Psoas muscle (tissue), 8 donors: ENCODE measurements at regions of chr16 and their contacts with region 1.

Region 1: GRCh38 chr16:19179546-19180490 is 11.8 kb downstream of the SYT17 start:
- DNase-seq: peak; percentile 66 to 82
- ATAC-seq: peak in 2 of 4 donors; percentile 60 to 74
- H3K4me3 ChIP-seq: no peak overlapping the region
- H3K27ac ChIP-seq: no peak overlapping the region
- H3K4me1 ChIP-seq: no peaks in the 10 kb centered on the region
- H3K27me3 ChIP-seq: no peaks in the 10 kb centered on the region
- CTCF ChIP-seq: peak; percentile 58

Region 2: GRCh38 chr16:19130852-19131810 is 48.7 kb before region 1 on chr16:
- intact Hi-C with region 1: loop called in 1 of 2 experiments (anchors 5 kb)
- DNase-seq: peak in 1 of 2 donors; percentile 56
- ATAC-seq: peak; percentile 31 to 60 (median 51)
- H3K4me3 ChIP-seq: no peak overlapping the region
- H3K27ac ChIP-seq: peak overlapping the region; percentile 70
- H3K4me1 ChIP-seq: peaks cover 5% of the 10 kb centered on the region
- H3K27me3 ChIP-seq: no peaks in the 10 kb centered on the region
- CTCF ChIP-seq: no peak